ENCODE measurements at regions of chr4 and their contacts with region 1.

Region 1: GRCh38 chr4:151362404-151363164 is 37.2 kb upstream of the SH3D19 start:
- DNase-seq: peak; percentile 66 to 88 (median 84)
- ATAC-seq: peak; percentile 94 to 100 (median 100)
- H3K4me3 ChIP-seq: peak overlapping the region in 1 of 4 donors; percentile 16
- H3K27ac ChIP-seq: no peak overlapping the region
- H3K4me1 ChIP-seq: no peaks in the 10 kb centered on the region
- H3K27me3 ChIP-seq: no peaks in the 10 kb centered on the region
- CTCF ChIP-seq: peak; percentile 82 to 98 (median 95)

Region 2: GRCh38 chr4:151276787-151277562 is 85.6 kb before region 1 on chr4 and contains the start of gene PRSS48:
- intact Hi-C with region 1: loop called in 1 of 3 experiments (anchors 5 kb)
- DNase-seq: peak; percentile 26 to 87 (median 66)
- ATAC-seq: peak; percentile 63 to 93 (median 88)
- H3K4me3 ChIP-seq: no peak within 1 kb of the TSS
- H3K27ac ChIP-seq: no peak within 1 kb of the TSS
- H3K4me1 ChIP-seq: no peaks in the 10 kb centered on the region
- H3K27me3 ChIP-seq: no peaks in the 10 kb centered on the region
- CTCF ChIP-seq: peak; percentile 37 to 67 (median 58)
- total RNA-seq, gene PRSS48: not detected

Measured in pancreas (tissue), 10 donors.